Activated B cell treated with CpG ODN at 0.5 μM for 24 hours (primary cell): ENCODE measurements at regions of chr17 and their contacts with region 1.

Region 1: DNA sequence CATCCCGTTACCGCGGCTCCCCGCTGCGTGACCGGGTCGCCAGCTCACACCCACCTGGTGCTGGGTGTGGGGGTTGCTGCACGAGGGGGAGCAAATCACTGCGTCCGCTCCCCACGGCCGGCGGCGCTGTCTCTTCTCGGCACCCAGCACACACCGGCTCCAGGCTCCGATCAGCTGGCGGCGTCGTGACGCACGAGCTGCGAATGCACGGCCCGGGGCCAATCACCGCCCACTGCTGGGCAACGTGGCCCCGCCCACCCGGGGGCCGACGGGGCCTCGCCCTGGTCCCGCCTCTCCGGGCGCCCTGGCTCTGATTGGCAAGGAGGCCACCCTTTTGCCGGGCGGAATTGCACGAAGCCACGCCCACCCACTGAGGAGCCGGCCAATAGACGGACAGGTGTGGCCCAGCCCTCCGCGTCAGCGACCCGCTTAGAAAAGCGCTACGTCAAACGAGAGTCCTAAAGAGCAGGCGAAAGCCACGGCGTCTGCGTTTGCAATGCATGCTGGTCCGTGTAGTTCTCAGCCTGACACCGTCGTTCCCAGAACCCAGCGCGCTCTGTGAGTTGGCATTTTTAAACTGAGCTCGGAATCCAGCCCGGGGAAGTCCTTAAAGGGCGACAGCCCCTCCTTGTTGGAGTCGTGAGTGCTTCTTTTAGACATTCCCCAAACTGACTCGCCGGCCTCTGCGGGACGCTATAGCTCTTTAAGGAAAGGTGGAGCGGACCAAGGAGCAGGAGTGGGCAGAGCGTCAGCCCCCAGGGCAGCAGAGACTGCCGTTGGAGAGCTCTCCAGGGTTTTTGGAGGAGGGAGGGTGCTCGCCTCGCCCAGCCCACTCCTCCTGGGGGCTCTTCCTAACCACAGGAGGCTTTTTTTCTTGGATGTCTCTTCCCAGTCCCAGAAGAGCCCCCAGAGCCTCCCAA is 6.2 kb upstream of the TLCD2 start:
- DNase-seq: peak; percentile 100
- ATAC-seq: peak; percentile 87
- H3K4me3 Mint-ChIP-seq: peak overlapping the region; percentile 91
- H3K27ac Mint-ChIP-seq: peak overlapping the region; percentile 94
- H3K4me1 Mint-ChIP-seq: peaks cover 28% of the 10 kb centered on the region
- H3K27me3 Mint-ChIP-seq: peaks cover 11% of the 10 kb centered on the region
- CTCF ChIP-seq: no peak

Region 2: DNA sequence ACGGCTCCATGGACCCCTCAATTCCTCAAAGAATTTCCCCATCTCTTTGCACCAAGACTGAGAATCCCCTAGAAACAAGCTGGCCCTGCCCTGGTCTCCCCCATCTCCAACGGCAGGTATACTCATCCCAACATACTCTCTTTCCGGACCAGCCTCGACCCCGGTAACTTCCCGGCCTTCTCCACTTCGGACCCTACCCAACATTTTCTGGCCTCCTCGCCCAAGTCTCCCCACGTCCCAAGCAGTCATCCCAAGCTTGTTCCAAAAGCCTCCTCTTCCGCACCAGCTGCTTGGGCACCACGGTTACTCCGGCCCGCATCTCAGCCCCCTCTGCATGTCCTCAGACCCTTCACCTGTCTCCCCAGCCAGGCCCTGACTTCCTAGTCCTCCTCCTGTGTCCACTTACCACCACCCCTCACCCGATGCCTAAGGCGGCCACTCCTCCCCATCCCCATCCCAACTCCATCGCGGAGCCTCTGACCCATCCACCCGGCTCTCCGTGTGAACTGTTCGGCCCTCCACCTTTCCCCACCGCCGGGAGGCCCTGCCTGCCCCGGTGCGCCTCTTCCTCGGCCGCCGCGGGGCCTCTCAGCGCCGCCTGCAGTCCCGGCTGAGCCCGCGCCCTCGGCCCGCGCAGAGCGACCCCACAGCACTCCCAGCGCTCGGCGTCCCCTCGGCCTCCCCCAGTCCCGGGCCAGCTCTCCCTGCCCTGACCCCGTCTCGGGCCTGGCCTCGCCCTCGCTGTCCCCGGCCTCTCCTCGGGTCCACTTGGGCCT is 154.7 kb before region 1 on chr17:
- CTCF ChIA-PET with region 1: no interaction called
- POLR2A ChIA-PET with region 1: interaction called, 9 read pairs
- intact Hi-C with region 1: loop called (anchors 2 kb)
- DNase-seq: peak; percentile 54
- ATAC-seq: peak; percentile 26
- H3K4me3 Mint-ChIP-seq: peak overlapping the region; percentile 86
- H3K27ac Mint-ChIP-seq: peak overlapping the region; percentile 71
- H3K4me1 Mint-ChIP-seq: peaks cover 52% of the 10 kb centered on the region
- H3K27me3 Mint-ChIP-seq: no peaks in the 10 kb centered on the region
- CTCF ChIP-seq: no peak

Region 3: DNA sequence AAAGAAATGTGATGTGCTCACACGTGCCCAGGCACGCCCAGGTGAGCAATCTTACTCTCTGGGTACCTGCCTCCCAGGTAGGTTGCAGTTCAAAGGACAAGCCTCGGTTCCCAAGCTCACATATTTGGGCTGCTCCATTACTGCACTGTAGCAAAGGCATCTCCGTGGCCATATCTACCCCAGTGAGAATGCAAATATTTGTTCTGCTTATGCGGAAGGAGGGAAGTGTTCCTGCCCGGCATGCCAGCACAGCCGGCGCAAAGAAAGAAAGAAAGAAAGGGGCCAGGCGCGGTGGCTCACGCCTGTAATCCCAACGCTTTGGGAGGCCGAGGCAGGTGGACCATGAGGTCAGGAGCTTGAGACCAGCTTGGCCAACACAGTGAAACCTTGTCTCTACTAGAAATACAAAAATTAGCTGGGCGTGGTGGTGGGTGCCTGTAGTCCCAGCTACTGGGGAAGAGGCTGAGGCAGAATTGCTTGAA is 118.4 kb before region 1 on chr17:
- CTCF ChIA-PET with region 1: no interaction called
- POLR2A ChIA-PET with region 1: no interaction called
- intact Hi-C with region 1: no loop called
- DNase-seq: no peak
- ATAC-seq: no peak
- H3K4me3 Mint-ChIP-seq: no peak overlapping the region
- H3K27ac Mint-ChIP-seq: no peak overlapping the region
- H3K4me1 Mint-ChIP-seq: peaks cover 31% of the 10 kb centered on the region
- H3K27me3 Mint-ChIP-seq: no peaks in the 10 kb centered on the region
- CTCF ChIP-seq: no peak

Region 4: DNA sequence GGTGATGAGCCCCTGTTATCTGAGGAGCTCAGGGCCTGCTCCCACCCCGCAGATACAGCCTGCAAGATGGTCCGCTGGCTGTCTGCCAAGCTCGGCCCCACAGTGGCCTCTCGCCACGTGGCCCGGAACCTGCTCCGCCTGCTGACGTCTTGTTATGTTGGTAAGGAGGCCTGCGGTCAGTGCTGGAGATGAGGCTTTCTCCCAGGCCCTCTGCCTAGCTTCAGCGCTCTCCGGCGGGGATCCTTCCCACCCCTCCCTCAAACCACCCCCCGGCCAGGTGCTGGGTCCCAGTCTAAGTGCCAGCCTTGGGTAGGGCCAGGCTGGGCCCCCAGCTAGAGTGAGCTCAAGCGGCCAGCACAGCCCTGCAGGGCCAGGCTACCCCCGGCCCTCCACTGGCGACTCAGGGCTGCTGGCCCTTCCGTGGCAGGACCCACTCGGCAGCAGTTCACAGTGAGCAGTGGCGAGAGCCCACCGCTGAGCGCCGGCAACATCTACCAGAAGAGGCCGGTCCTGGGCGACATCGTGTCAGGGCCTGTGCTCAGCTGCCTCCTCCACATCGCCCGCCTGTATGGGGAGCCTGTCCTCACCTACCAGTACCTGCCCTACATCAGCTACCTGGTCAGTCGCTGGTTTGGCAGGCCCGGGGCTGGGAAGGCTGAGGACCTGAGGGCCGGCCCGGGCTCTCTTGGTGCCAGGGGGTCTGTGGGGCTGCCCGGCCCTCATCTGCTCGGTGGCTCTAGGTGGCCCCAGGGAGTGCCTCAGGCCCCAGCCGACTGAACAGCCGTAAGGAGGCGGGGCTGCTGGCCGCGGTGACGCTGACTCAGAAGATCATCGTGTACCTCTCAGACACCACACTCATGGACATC is 14.2 kb after region 1 on chr17:
- CTCF ChIA-PET with region 1: interaction called, 16 read pairs
- POLR2A ChIA-PET with region 1: interaction called, 67 read pairs
- intact Hi-C with region 1: no loop called
- DNase-seq: no peak
- ATAC-seq: no peak
- H3K4me3 Mint-ChIP-seq: no peak overlapping the region
- H3K27ac Mint-ChIP-seq: peak overlapping the region; percentile 24
- H3K4me1 Mint-ChIP-seq: peaks cover 56% of the 10 kb centered on the region
- H3K27me3 Mint-ChIP-seq: no peaks in the 10 kb centered on the region
- CTCF ChIP-seq: no peak

Region 5: GRCh38 chr17:1769822-1770477 is 53.6 kb after region 1 on chr17:
- CTCF ChIA-PET with region 1: interaction called, 5 read pairs
- POLR2A ChIA-PET with region 1: interaction called, 47 read pairs
- intact Hi-C with region 1: no loop called
- DNase-seq: no peak
- ATAC-seq: peak; percentile 46
- H3K4me3 Mint-ChIP-seq: peak overlapping the region; percentile 58
- H3K27ac Mint-ChIP-seq: peak overlapping the region; percentile 82
- H3K4me1 Mint-ChIP-seq: peaks cover 52% of the 10 kb centered on the region
- H3K27me3 Mint-ChIP-seq: no peaks in the 10 kb centered on the region
- CTCF ChIP-seq: no peak

Region 6: GRCh38 chr17:1865252-1866037 is 149.1 kb after region 1 on chr17:
- CTCF ChIA-PET with region 1: interaction called, 45 read pairs
- POLR2A ChIA-PET with region 1: interaction called, 3 read pairs
- intact Hi-C with region 1: loop called (anchors 1 kb)
- DNase-seq: no peak
- ATAC-seq: peak; percentile 42
- H3K4me3 Mint-ChIP-seq: no peak overlapping the region
- H3K27ac Mint-ChIP-seq: no peak overlapping the region
- H3K4me1 Mint-ChIP-seq: no peaks in the 10 kb centered on the region
- H3K27me3 Mint-ChIP-seq: no peaks in the 10 kb centered on the region
- CTCF ChIP-seq: peak; percentile 63

Region 7: DNA sequence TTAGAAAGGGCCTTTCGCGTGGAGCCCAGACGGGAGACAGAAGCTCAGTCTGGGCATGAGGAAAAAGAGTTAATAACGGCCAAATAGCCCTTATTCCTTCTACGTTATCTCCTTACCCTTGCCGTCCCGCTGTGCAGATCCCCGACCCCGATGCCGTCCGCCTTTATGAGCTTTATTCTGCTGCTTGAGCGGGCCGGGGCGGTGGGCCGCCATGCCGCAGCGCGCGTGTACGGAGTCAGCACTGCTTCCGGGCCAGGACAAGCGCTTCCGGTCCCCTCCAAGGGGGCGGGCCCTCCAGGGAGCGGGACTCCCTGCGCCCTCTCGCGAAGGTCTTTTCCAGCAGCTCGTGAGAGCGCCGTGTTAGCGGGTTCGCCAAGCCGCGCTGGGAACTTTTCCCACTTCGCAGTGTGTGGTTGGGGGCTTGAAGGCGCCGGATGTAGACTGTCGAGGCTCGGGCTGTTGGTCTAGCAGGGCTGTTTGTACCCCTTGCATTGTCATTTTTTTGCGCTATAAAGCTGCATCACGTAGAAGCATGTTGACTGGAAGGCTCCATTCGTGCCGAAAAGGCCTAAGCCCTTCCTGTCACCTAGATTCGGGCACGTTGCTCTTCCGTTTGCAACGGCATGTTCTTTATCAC is 620.0 kb after region 1 on chr17 and contains the start of gene TSR1:
- CTCF ChIA-PET with region 1: no interaction called
- POLR2A ChIA-PET with region 1: interaction called, 5 read pairs
- intact Hi-C with region 1: loop called (anchors 2 kb)
- DNase-seq: peak; percentile 85
- ATAC-seq: peak; percentile 79
- H3K4me3 Mint-ChIP-seq: peak within 1 kb of the TSS; percentile 99
- H3K27ac Mint-ChIP-seq: peak within 1 kb of the TSS; percentile 96
- H3K4me1 Mint-ChIP-seq: peaks cover 23% of the 10 kb centered on the region
- H3K27me3 Mint-ChIP-seq: no peaks in the 10 kb centered on the region
- CTCF ChIP-seq: no peak
- total RNA-seq, gene TSR1: 46.4 and 48.5 TPM in 2 replicates